ENCODE measurements at regions of chr2 and their contacts with region 1.

Region 1: DNA sequence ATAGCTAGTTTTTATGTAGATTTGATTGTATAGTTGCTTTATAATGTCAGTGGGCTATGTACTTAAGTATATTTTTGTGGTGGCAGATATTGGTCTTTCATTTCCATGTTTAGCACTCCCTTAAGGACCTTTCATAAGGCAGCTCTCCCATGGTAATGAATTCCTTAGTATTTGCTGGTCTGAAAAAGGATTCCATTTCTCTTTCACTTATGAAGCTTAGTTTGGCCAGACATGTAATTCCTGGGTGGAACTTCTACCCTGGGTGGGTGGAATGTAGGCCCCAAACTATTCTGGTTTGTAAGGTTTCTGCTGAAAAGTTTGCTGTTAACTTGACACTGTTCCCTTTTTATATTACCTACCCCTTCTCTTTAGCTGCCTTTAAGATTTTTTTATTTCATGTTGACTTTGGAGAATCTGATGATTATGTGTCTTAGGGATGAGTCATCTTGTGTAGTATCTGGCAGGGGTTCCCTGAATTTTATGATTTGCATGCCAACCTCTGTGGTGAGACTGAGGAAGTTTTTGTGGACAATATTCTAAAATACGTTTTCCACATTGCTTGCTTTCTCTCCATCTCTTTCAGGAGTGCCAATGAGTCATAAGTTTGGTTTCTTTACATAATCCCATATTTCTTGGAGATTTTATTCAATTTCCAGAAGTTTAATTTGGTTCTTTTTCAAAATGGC is 65.4 kb upstream of the VRK2 start:
- DNase-seq: peak; percentile 96
- ATAC-seq: peak; percentile 93
- H3K4me3 ChIP-seq: no peak overlapping the region
- H3K27ac ChIP-seq: peak overlapping the region; percentile 86
- H3K4me1 ChIP-seq: peaks cover 23% of the 10 kb centered on the region
- H3K27me3 ChIP-seq: no peaks in the 10 kb centered on the region
- CTCF ChIP-seq: no peak

Region 2: GRCh38 chr2:58019209-58019608 is 38.0 kb after region 1 on chr2:
- CTCF ChIA-PET with region 1: no interaction called
- POLR2A ChIA-PET with region 1: no interaction called
- intact Hi-C with region 1: loop called (anchors 2 kb)
- DNase-seq: peak; percentile 42
- ATAC-seq: peak; percentile 84
- H3K4me3 ChIP-seq: no peak overlapping the region
- H3K27ac ChIP-seq: no peak overlapping the region
- H3K4me1 ChIP-seq: peaks cover 15% of the 10 kb centered on the region
- H3K27me3 ChIP-seq: no peaks in the 10 kb centered on the region
- CTCF ChIP-seq: no peak

Region 3: DNA sequence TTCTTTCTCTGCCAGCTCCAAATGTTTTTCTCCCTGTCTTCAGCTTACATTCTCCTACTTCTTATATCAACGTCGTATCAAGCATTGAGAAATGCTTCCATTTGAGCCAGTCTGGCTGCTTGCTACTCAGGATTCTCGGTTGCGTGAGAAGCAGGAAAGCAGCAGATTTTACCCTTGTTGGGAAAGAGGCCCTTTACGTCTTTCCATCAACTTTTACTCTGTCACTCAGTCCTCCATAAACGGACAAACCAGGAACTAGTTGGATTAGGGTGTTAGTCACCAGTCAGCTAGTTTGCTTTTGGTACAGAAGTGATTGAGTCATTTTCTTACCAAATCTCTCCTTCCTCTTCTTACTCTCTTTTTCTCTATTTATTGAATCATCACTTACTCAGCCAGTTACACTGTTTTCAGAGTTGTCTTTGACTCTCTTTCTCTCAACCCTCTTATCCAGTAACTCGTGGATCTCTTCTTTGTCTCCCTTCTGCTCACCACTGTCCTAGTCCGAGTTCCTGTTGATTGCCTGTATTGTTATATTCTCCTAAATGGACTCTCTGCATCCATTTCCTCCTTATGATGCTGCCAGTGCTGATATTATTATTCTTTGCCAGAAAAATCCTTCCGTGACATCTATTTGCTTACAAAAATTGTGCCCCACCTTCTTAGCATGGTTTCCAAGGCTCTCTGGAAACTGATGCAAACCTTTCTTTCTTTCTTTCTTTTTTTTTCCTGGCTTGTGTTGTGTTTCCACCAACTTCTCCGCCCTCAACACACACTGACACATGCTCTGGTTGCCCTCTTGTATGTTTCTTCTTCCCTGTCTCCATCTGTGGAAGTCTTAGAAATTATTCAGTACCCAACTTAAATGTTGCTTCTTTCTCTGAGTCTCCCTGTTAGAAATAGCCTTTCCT is 126.8 kb after region 1 on chr2:
- CTCF ChIA-PET with region 1: no interaction called
- POLR2A ChIA-PET with region 1: no interaction called
- intact Hi-C with region 1: loop called (anchors 10 kb)
- DNase-seq: peak; percentile 93
- ATAC-seq: peak; percentile 79
- H3K4me3 ChIP-seq: peak overlapping the region; percentile 25
- H3K27ac ChIP-seq: peak overlapping the region; percentile 99
- H3K4me1 ChIP-seq: peaks cover 63% of the 10 kb centered on the region
- H3K27me3 ChIP-seq: no peaks in the 10 kb centered on the region
- CTCF ChIP-seq: no peak

Measured in PC-3 (cell line).